Activated naive CD8-positive, alpha-beta T cell treated with anti-CD3 and anti-CD28 coated beads, Interleukin-2, amount 10 ng/mL, durations not matched to agents 7 days and 5 days (primary cell): ENCODE measurements at regions of chr1 and their contacts with region 1.

Region 1: GRCh38 chr1:175023043-175023921 is at the start of gene MRPS14:
- DNase-seq: peak; percentile 96
- ATAC-seq: peak; percentile 95
- H3K4me3 Mint-ChIP-seq: peak within 1 kb of the TSS; percentile 93
- H3K27ac Mint-ChIP-seq: peak within 1 kb of the TSS; percentile 93
- H3K4me1 Mint-ChIP-seq: peaks cover 25% of the 10 kb centered on the region
- H3K27me3 Mint-ChIP-seq: no peaks in the 10 kb centered on the region
- total RNA-seq, gene MRPS14: 34.0 to 38.4 TPM

Region 2: DNA sequence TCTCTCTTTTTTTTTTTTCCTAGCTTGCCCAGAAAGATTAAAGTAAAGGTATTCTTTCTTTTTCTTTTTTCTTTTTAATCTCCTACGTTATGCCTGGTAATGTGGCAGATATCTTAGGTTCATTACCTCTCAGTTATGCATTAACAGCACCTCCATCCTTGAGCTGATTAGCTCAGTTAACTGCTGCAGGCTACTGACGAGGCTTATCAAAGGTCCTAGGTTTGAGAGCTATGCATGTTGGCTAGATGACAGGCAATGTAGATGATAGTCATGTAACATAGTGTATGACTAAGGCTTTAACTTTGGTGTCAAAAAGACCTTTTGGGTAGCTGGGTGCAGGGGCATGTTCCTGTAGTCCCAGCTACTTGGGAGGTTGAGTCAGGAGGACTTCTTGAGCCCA is 77.3 kb before region 1 on chr1:
- POLR2A ChIA-PET with region 1: no interaction called
- DNase-seq: no peak
- ATAC-seq: no peak
- H3K4me3 Mint-ChIP-seq: no peak overlapping the region
- H3K27ac Mint-ChIP-seq: no peak overlapping the region
- H3K4me1 Mint-ChIP-seq: no peaks in the 10 kb centered on the region
- H3K27me3 Mint-ChIP-seq: peaks cover 2% of the 10 kb centered on the region

Region 3: GRCh38 chr1:175005085-175005783 is 18.0 kb before region 1 on chr1:
- POLR2A ChIA-PET with region 1: interaction called, 105 read pairs
- DNase-seq: no peak
- ATAC-seq: no peak
- H3K4me3 Mint-ChIP-seq: no peak overlapping the region
- H3K27ac Mint-ChIP-seq: no peak overlapping the region
- H3K4me1 Mint-ChIP-seq: peaks cover 42% of the 10 kb centered on the region
- H3K27me3 Mint-ChIP-seq: no peaks in the 10 kb centered on the region